ENCODE measurements at regions of chr19 and their contacts with region 1.

Region 1: DNA sequence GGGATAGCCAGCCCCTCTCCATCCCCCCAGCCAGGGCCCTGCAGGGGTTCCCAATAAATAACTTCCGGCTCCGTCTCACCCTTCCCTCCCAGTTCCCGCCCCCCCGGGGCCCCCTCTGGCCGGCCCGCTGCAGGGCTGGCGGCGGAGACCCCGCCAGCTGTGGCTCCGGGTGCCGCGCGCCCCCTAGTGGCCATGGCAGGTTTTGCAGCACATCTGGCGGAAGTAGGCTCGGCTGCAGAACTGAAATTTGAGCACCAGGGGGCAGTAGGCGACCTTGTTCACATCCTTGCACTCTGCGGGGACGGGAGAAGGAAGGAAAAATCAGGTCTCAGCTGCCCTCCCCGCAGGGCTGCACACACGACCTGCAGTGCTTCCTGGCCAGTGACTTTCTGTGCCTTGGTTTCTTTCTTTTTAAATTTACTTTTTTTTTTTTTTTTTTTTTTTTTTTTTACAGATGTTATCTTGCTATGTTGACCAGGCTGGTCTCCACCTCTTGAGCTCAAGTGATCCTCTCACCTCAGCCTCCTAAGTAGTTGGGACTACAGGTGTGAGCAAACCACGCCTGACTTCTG is 3.6 kb upstream of the MYO1F start:
- DNase-seq: peak; percentile 90
- H3K4me3 Mint-ChIP-seq: no peak overlapping the region
- H3K27ac Mint-ChIP-seq: no peak overlapping the region
- H3K4me1 Mint-ChIP-seq: peaks cover 29% of the 10 kb centered on the region
- H3K27me3 Mint-ChIP-seq: peaks cover 2% of the 10 kb centered on the region

Region 2: DNA sequence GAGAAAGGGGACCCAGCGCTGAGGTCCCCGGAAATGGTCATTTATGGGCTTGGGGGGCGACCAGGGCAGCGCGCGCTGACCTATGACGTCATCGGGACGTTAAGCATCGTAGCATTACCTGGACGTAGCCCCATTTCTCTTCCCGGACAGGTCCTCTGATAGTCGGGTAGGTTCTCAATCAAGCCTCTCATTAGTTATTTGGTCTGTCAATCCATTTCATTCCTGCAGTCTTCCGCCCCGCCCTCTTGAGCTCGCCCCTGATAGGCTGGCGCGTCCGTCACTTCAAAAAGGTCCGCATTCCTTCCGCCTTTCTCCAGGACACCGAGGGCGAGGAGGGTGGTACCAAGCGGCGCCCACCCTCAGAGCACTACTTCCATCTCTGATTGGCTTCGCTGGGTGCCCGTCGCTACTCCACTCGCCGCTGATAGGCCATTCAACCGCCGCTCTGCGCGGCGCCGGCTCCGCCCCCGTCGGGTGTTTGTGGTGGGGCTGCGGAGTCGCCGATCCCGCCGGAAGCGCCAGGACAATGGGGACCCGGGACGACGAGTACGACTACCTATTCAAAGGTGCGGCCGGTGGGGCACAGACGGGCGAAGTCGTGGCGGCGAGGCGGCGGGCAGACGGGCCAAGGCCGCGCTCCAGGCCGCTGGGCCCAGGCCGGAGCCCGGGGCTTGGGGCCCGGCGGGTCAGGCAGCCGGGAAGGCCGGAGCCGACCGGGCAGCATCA is 190.7 kb before region 1 on chr19 and contains the start of gene RAB11B:
- CTCF ChIA-PET with region 1: interaction called, 3 read pairs
- POLR2A ChIA-PET with region 1: interaction called, 4 read pairs
- intact Hi-C with region 1: loop called (anchors 5 kb)
- DNase-seq: peak; percentile 100
- H3K4me3 Mint-ChIP-seq: peak within 1 kb of the TSS; percentile 92
- H3K27ac Mint-ChIP-seq: peak within 1 kb of the TSS; percentile 97
- H3K4me1 Mint-ChIP-seq: peaks cover 19% of the 10 kb centered on the region
- H3K27me3 Mint-ChIP-seq: no peaks in the 10 kb centered on the region
- total RNA-seq, gene RAB11B: 74.2 to 74.9 TPM

Region 3: DNA sequence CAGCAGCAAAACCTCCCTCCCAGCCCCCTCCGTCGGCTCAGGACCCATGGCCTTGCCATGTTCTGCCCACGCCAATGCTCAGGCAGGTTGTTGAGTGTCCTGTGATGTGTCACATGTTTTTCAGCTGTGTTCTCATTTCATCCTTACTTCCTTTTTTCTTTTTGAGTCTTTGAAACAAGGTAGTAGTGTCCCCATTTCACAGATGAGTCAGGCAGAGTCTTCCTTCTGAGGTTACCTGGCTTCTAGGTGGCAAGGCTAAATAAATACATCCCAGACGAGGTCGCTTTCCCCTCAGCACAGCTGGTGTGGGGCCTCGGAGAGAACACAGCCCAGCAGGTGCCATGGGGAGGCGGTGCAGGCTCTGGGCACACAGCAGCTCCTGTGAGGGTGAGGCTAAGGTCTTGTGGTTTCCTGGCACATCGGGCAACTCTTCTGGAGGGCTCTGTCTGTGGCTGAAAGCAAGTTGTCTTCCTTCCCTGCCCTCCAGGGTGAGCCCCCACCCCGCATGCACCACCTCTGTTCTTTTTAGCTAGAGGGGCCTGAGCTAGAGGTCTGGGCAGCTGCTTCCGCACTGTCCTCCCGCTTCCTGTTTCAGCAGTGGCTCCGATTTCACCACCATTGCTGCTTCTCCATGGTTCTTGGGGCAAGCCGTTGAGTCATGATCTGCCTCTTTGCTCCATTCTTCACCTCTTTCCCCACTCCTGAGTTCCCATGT is 93.5 kb before region 1 on chr19:
- CTCF ChIA-PET with region 1: interaction called, 33 read pairs
- POLR2A ChIA-PET with region 1: interaction called, 5 read pairs
- intact Hi-C with region 1: no loop called
- DNase-seq: peak; percentile 82
- H3K4me3 Mint-ChIP-seq: no peak overlapping the region
- H3K27ac Mint-ChIP-seq: peak overlapping the region; percentile 94
- H3K4me1 Mint-ChIP-seq: peaks cover 24% of the 10 kb centered on the region
- H3K27me3 Mint-ChIP-seq: no peaks in the 10 kb centered on the region

Region 4: DNA sequence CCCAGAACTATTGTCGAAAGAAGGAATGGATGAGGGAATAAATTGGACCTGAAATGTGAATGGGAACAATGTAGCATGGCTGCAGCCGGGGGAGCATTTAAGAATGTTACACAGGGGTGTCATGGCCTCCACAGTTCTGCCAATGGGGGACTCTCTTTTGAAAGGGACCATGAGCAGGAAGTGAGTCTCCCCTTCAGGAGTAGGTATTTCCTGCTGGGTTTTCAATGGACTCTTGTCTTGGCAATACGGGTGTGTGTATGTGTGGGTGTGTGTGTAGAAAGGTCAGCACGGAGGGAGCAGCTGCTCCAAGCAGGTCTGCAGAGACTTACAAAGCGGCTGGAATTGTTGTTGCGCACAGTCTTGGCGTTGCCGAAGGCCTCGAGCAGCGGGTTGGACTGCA is 28.0 kb before region 1 on chr19:
- CTCF ChIA-PET with region 1: interaction called, 61 read pairs
- POLR2A ChIA-PET with region 1: no interaction called
- intact Hi-C with region 1: no loop called
- DNase-seq: no peak
- H3K4me3 Mint-ChIP-seq: no peak overlapping the region
- H3K27ac Mint-ChIP-seq: no peak overlapping the region
- H3K4me1 Mint-ChIP-seq: peaks cover 5% of the 10 kb centered on the region
- H3K27me3 Mint-ChIP-seq: no peaks in the 10 kb centered on the region

Region 5: DNA sequence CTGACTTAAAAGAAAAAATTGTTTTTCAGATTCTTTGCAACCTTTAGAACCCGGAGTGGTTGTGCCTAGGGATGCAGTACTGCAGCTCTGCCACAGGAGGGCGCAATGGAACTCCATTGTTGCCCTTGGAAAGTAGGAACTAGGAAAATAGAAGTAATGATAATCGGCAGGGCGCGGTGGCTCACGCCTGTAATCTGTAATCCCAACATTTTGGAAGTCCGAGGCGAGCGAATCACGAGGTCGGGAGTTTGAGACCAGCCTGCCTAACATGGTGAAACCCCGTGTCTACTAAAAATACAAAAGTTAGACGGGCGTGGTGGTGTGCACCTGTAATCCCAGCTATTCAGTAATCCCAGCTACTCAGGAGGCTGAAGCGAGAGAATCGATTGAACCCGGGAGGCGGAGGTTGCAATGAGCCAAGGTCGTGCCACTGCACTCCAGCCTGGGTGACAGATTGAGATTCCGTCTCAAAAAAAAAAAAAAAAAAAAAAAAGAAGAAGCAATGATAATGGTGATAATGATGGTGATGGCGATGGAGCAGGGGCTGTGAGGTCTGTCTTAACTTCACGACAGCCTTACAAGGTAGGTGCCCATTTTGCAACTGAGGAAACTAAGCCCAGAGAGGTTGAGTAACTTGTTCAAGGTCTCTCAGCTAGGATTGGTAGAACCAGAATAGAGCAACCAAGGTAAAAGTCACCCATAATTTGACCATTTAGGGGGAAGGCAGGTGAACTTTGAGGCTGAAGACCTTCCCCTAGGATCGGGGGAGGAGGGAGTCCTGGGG is 35.2 kb after region 1 on chr19:
- CTCF ChIA-PET with region 1: interaction called, 15 read pairs
- POLR2A ChIA-PET with region 1: no interaction called
- intact Hi-C with region 1: no loop called
- DNase-seq: peak; percentile 77
- H3K4me3 Mint-ChIP-seq: no peak overlapping the region
- H3K27ac Mint-ChIP-seq: no peak overlapping the region
- H3K4me1 Mint-ChIP-seq: peaks cover 11% of the 10 kb centered on the region
- H3K27me3 Mint-ChIP-seq: no peaks in the 10 kb centered on the region

Region 6: DNA sequence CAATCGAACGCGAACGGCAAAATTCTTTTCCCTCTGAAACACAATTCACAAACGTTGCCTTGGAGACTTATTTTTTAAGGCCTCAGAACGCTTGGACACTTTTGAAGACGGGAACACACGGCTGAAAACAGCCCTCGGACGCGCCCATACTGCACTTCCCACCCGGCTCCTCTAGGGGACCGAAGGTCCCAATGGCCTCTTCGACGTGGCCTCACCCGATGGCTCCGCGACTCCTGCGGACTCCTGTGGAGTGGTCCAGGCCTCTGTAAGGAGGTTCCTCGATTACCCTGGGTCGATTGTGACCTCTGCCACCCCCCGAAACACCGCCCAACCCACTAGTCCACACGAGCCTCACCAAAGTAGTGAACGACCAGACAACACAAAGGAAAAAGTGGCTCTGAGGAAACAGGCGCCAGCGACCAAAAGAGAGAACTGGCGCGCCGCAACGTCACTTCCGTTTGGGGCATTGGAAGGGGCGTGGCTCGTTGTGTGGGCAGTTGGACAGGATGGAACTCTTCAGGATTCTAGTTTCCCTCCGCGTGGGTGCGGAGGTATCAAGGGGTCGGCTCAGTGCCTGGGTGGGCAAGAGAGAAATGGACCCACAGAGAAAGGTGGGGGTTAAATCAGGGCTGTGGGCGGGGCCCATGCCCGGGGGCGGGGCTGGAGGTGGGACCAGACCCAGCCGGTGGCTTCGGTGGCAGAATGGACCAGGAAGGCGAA is 917.5 kb after region 1 on chr19 and contains the start of gene ZNF560:
- CTCF ChIA-PET with region 1: no interaction called
- POLR2A ChIA-PET with region 1: no interaction called
- intact Hi-C with region 1: no loop called
- DNase-seq: peak; percentile 22
- H3K4me3 Mint-ChIP-seq: peak within 1 kb of the TSS; percentile 45
- H3K27ac Mint-ChIP-seq: no peak within 1 kb of the TSS
- H3K4me1 Mint-ChIP-seq: no peaks in the 10 kb centered on the region
- H3K27me3 Mint-ChIP-seq: no peaks in the 10 kb centered on the region
- total RNA-seq, gene ZNF560: not detected

Measured in activated CD4-positive, alpha-beta memory T cell treated with anti-CD3 and anti-CD28 coated beads for 36 hours (primary cell).